ENCODE measurements at regions of chr9 and their contacts with region 1.

Region 1: DNA sequence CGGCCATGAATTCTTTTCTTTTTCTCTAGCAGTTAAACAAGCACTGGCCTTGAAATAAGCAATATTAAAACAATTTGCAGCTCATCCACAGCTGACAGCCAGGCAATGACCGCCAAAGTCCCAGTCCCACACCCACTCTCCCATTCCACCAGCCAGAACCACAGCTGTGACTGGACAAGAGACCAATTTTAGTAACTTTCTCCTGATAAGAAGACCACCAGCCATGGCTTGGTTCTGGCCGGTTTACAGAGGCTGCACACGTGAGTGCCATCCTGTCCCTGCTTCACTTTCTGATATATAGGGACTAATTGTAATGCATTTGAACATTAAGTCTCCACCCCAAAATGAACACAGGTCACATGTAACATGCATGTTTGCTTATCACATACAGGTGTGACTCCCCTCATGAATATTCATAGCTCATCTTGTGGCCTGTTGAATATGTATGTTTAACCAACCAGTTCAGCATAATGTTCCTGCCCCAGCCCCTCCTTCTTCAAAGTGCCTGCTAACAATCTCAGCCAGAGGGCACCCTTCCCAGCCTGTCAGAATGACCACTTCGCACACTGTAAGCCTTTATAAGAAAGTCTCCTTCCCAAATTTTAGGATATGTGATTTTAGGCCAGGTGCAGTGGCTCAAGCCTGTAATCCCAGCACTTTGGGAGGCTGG is 23.9 kb upstream of the FANCC start:
- DNase-seq: no peak
- ATAC-seq: peak in 2 of 4 donors; percentile 50 to 52
- H3K4me3 ChIP-seq: no peak overlapping the region
- H3K27ac ChIP-seq: no peak overlapping the region
- H3K4me1 ChIP-seq: no peaks in the 10 kb centered on the region
- H3K27me3 ChIP-seq: no peaks in the 10 kb centered on the region
- CTCF ChIP-seq: no peak

Region 2: GRCh38 chr9:95143591-95144561 is 197.6 kb before region 1 on chr9:
- intact Hi-C with region 1: no loop called
- DNase-seq: peak in 3 of 6 donors; percentile 46 to 51 (median 47)
- ATAC-seq: peak in 3 of 4 donors; percentile 68 to 72 (median 69)
- H3K4me3 ChIP-seq: no peak overlapping the region
- H3K27ac ChIP-seq: no peak overlapping the region
- H3K4me1 ChIP-seq: peaks cover 0 to 4% (median 0%) of the 10 kb centered on the region in 3 donors
- H3K27me3 ChIP-seq: no peaks in the 10 kb centered on the region
- CTCF ChIP-seq: no peak

Region 3: GRCh38 chr9:95249986-95250385 is 91.4 kb before region 1 on chr9:
- intact Hi-C with region 1: no loop called
- DNase-seq: peak in 4 of 6 donors; percentile 49 to 69 (median 56)
- ATAC-seq: peak; percentile 95 to 100 (median 98)
- H3K4me3 ChIP-seq: no peak overlapping the region
- H3K27ac ChIP-seq: peak overlapping the region in 2 of 4 donors; percentile 12 to 15
- H3K4me1 ChIP-seq: peaks cover 0 to 10% (median 9%) of the 10 kb centered on the region in 3 donors
- H3K27me3 ChIP-seq: no peaks in the 10 kb centered on the region
- CTCF ChIP-seq: no peak

Region 4: GRCh38 chr9:95510709-95511615 is 169.5 kb after region 1 on chr9:
- intact Hi-C with region 1: no loop called
- DNase-seq: peak; percentile 88 to 96 (median 94)
- ATAC-seq: peak; percentile 65 to 78 (median 76)
- H3K4me3 ChIP-seq: peak overlapping the region; percentile 16 to 84 (median 70)
- H3K27ac ChIP-seq: peak overlapping the region; percentile 62 to 94 (median 83)
- H3K4me1 ChIP-seq: peaks cover 0 to 4% (median 0%) of the 10 kb centered on the region in 3 donors
- H3K27me3 ChIP-seq: no peaks in the 10 kb centered on the region
- CTCF ChIP-seq: no peak

Region 5: GRCh38 chr9:95864852-95865580 is 523.6 kb after region 1 on chr9:
- intact Hi-C with region 1: loop called in 1 of 3 experiments (anchors 10 kb)
- DNase-seq: no peak
- ATAC-seq: no peak
- H3K4me3 ChIP-seq: no peak overlapping the region
- H3K27ac ChIP-seq: no peak overlapping the region
- H3K4me1 ChIP-seq: no peaks in the 10 kb centered on the region
- H3K27me3 ChIP-seq: no peaks in the 10 kb centered on the region
- CTCF ChIP-seq: no peak

Measured in pancreas (tissue), 10 donors.